Heart left ventricle (tissue), 16 donors: ENCODE measurements at regions of chr2 and their contacts with region 1.

Region 1: DNA sequence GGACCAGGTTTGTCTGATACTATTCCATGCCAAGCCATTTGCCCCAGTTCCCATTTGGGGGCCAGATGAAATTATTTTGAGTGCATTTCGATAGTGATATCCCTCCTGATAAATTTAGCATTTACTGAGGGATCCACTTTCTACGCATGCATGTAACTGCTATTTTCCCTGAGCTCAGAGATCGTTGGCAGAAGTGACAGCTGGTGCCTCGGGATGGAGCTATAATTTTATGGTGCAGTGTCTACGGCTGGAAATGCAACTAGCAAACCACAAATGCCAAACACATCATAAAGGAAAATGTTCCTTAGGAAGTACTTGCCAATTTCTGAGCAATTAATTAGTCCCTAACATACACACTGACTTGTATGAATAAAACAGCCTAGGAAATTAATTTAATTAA is 254.8 kb downstream of the SLC8A1 start:
- DNase-seq: no peak
- ATAC-seq: peak in 1 of 4 donors; percentile 43
- H3K4me3 ChIP-seq: no peak overlapping the region
- H3K27ac ChIP-seq: peak overlapping the region in 1 of 12 donors; percentile 40
- H3K4me1 ChIP-seq: peaks cover 0 to 42% (median 10%) of the 10 kb centered on the region in 12 donors
- H3K27me3 ChIP-seq: no peaks in the 10 kb centered on the region
- CTCF ChIP-seq: no peak
- POLR2A ChIP-seq: no peak

Region 2: GRCh38 chr2:39837856-39838453 is 359.2 kb before region 1 on chr2:
- intact Hi-C with region 1: no loop called
- DNase-seq: no peak
- ATAC-seq: peak in 2 of 4 donors; percentile 29 to 51
- H3K4me3 ChIP-seq: no peak overlapping the region
- H3K27ac ChIP-seq: no peak overlapping the region
- H3K4me1 ChIP-seq: no peaks in the 10 kb centered on the region
- H3K27me3 ChIP-seq: no peaks in the 10 kb centered on the region
- CTCF ChIP-seq: peak; percentile 48 to 73 (median 65)
- POLR2A ChIP-seq: no peak

Region 3: GRCh38 chr2:40168041-40168442 is 29.1 kb before region 1 on chr2:
- intact Hi-C with region 1: loop called in 1 of 10 experiments (anchors 2 kb)
- DNase-seq: no peak
- ATAC-seq: peak; percentile 48 to 62 (median 53)
- H3K4me3 ChIP-seq: no peak overlapping the region
- H3K27ac ChIP-seq: no peak overlapping the region
- H3K4me1 ChIP-seq: peaks cover 0 to 54% (median 27%) of the 10 kb centered on the region in 12 donors
- H3K27me3 ChIP-seq: no peaks in the 10 kb centered on the region
- CTCF ChIP-seq: no peak
- POLR2A ChIP-seq: no peak